Caco-2 (cell line): ENCODE measurements at regions of chr17 and their contacts with region 1.

Region 1: DNA sequence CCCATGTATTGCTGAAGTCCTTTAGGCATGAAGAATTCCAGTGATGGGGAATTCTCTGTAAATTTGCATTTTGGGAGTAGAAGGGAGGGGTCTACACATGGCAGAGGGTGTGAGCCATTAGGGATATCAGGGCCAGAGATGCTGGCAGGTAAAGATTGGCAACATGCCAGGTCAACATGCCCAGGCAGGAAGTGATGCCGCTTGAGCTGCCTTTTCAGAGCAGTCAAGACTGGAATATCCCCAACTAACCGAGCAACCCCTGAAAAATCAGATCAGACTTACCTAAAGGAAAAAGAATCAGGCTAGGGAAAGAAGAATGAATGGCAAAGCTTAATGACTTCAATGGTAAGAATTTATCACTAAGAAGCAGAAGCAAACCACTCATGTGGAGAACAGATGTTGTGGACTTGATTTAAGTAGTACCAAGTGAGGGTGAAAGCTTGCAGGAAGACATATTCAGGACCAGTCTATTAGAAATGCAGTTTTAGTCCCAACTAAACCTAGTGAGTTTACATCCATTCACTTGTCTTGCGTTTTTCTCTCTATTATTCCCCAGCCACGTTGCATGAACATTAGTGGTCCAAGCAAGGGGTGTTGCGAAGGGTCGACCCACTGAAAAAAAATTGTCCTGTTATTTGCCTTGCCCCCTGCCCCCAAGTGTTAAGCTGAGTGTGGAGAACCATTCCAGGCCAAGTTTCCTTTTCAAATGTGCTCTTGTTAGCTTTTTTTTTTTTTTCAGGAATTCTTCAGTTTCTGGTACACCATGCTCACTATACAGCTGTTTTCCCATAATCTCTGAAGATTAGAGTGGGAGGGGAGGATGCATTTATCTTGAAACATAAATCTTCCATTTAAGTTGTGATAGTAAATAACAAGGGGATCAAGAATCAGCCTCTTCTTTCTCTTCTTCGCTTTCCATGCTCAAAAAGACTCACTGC is 105.2 kb downstream of the ABCA8 start:
- DNase-seq: no peak
- H3K4me3 ChIP-seq: no peak overlapping the region
- H3K4me3 Mint-ChIP-seq: no peak overlapping the region
- H3K27ac Mint-ChIP-seq: no peak overlapping the region
- H3K4me1 ChIP-seq: no peaks in the 10 kb centered on the region
- H3K4me1 Mint-ChIP-seq: no peaks in the 10 kb centered on the region
- H3K27me3 ChIP-seq: no peaks in the 10 kb centered on the region
- H3K27me3 Mint-ChIP-seq: no peaks in the 10 kb centered on the region
- CTCF ChIP-seq: no peak

Region 2: DNA sequence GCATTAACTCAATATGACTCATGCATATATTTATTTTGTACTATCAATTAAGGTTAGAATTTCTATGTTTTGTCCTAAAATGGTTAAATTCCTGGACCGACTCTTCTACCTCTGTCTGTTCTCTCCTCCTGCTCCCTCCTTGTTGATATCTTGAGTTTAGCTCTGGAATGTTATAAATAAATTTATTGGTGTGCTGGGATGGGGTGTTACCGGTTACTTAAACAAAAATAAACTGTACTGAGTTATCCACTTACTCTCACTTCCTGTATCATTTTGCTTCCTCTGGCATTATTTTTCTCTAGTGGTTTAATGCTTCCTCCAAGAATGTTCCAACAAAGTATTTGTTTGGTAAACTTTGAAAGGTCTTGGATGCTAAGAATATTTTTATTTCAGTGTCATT is 14.9 kb before region 1 on chr17:
- CTCF ChIA-PET with region 1: no interaction called
- POLR2A ChIA-PET with region 1: no interaction called
- intact Hi-C with region 1: no loop called
- DNase-seq: no peak
- H3K4me3 ChIP-seq: no peak overlapping the region
- H3K4me3 Mint-ChIP-seq: no peak overlapping the region
- H3K27ac Mint-ChIP-seq: no peak overlapping the region
- H3K4me1 ChIP-seq: no peaks in the 10 kb centered on the region
- H3K4me1 Mint-ChIP-seq: no peaks in the 10 kb centered on the region
- H3K27me3 ChIP-seq: no peaks in the 10 kb centered on the region
- H3K27me3 Mint-ChIP-seq: no peaks in the 10 kb centered on the region
- CTCF ChIP-seq: no peak

Region 3: DNA sequence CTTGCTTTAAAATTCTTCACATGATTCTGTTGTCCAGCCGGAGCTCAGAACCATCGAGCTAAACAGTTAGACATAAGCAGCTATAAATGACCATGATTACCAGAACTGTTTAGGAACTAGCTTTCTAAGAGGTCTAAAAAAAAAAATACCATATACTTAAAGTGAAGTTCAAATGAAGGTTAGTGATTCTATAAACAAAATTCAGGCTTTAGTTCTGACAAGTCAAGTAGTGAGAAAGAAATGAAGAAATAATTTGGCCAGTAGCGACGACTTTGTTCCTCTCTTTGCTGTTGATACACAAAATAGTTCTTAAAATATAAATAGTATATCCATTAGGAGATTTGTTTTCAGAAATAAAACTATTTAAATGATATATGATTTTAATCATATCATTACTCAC is 77.6 kb after region 1 on chr17:
- CTCF ChIA-PET with region 1: no interaction called
- POLR2A ChIA-PET with region 1: interaction called, 10 read pairs
- intact Hi-C with region 1: no loop called
- DNase-seq: no peak
- H3K4me3 ChIP-seq: no peak overlapping the region
- H3K4me3 Mint-ChIP-seq: no peak overlapping the region
- H3K27ac Mint-ChIP-seq: no peak overlapping the region
- H3K4me1 ChIP-seq: no peaks in the 10 kb centered on the region
- H3K4me1 Mint-ChIP-seq: no peaks in the 10 kb centered on the region
- H3K27me3 ChIP-seq: no peaks in the 10 kb centered on the region
- H3K27me3 Mint-ChIP-seq: no peaks in the 10 kb centered on the region
- CTCF ChIP-seq: no peak